HCT116 (cell line): ENCODE measurements at regions of chr7 and their contacts with region 1.

Region 1: DNA sequence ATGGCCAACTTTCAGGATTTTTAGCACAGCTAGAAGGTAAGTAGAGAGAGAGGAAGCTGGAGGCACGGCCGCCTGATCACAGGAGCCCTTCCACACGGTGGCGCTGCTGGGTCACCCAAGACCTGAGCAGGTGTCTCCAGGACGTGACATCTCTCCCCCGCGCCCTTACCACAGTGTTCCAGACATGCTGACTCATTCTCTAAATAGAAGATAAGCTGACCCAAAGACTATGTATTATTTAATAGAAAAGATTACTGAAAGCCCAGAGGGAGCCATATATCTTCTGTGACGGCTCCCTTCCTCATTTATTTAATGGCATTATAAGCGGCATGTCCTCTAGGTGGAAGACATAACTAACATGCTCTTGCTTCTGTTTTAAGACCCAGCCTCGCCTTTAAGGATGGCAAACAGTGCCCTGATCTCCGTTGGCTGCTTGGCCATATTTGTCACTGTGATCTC is 26.0 kb upstream of the MALSU1 start:
- DNase-seq: peak; percentile 93
- ATAC-seq: peak; percentile 95
- H3K4me3 ChIP-seq: peak overlapping the region; percentile 34 to 47
- H3K27ac ChIP-seq: peak overlapping the region; percentile 57
- H3K4me1 ChIP-seq: peaks cover 9 to 24% of the 10 kb centered on the region in 2 experiments; a peak in 3 of 4 replicates
- H3K27me3 ChIP-seq: no peaks in the 10 kb centered on the region
- CTCF ChIP-seq: peak; percentile 85 to 89 (median 89)
- POLR2A ChIP-seq: no peak
- RAD21 ChIP-seq: peak; percentile 90

Region 2: GRCh38 chr7:22833113-22833855 is 439.9 kb before region 1 on chr7:
- CTCF ChIA-PET with region 1: no interaction called
- POLR2A ChIA-PET with region 1: no interaction called
- RAD21 ChIA-PET with region 1: no interaction called
- intact Hi-C with region 1: no loop called
- DNase-seq: no peak
- ATAC-seq: no peak
- H3K4me3 ChIP-seq: no peak overlapping the region
- H3K27ac ChIP-seq: no peak overlapping the region
- H3K4me1 ChIP-seq: no peaks in the 10 kb centered on the region
- H3K27me3 ChIP-seq: no peaks in the 10 kb centered on the region
- CTCF ChIP-seq: no peak
- POLR2A ChIP-seq: no peak
- RAD21 ChIP-seq: no peak

Region 3: GRCh38 chr7:23181684-23182553 is 91.3 kb before region 1 on chr7 and contains the start of gene NUP42:
- CTCF ChIA-PET with region 1: interaction called, 10 read pairs
- POLR2A ChIA-PET with region 1: interaction called, 4 read pairs
- RAD21 ChIA-PET with region 1: no interaction called
- intact Hi-C with region 1: no loop called
- DNase-seq: peak; percentile 99
- ATAC-seq: peak; percentile 94
- H3K4me3 ChIP-seq: peak within 1 kb of the TSS; percentile 89 to 92
- H3K27ac ChIP-seq: peak within 1 kb of the TSS; percentile 78
- H3K4me1 ChIP-seq: peaks cover 5 to 14% of the 10 kb centered on the region in 2 experiments; a peak in 3 of 4 replicates
- H3K27me3 ChIP-seq: no peaks in the 10 kb centered on the region
- CTCF ChIP-seq: no peak
- POLR2A ChIP-seq: peak; percentile 76
- RAD21 ChIP-seq: no peak
- total RNA-seq, gene NUP42: 36.5 TPM

Region 4: GRCh38 chr7:23285657-23286646 is 12.8 kb after region 1 on chr7:
- CTCF ChIA-PET with region 1: interaction called, 11 read pairs
- POLR2A ChIA-PET with region 1: no interaction called
- RAD21 ChIA-PET with region 1: no interaction called
- intact Hi-C with region 1: no loop called
- DNase-seq: no peak
- ATAC-seq: peak; percentile 69
- H3K4me3 ChIP-seq: no peak overlapping the region
- H3K27ac ChIP-seq: no peak overlapping the region
- H3K4me1 ChIP-seq: no peaks in the 10 kb centered on the region
- H3K27me3 ChIP-seq: no peaks in the 10 kb centered on the region
- CTCF ChIP-seq: no peak
- POLR2A ChIP-seq: no peak
- RAD21 ChIP-seq: no peak

Region 5: GRCh38 chr7:23449941-23450340 is 176.8 kb after region 1 on chr7:
- CTCF ChIA-PET with region 1: no interaction called
- POLR2A ChIA-PET with region 1: no interaction called
- RAD21 ChIA-PET with region 1: no interaction called
- intact Hi-C with region 1: no loop called
- DNase-seq: no peak
- ATAC-seq: no peak
- H3K4me3 ChIP-seq: no peak overlapping the region
- H3K27ac ChIP-seq: no peak overlapping the region
- H3K4me1 ChIP-seq: peaks cover 0 to 10% of the 10 kb centered on the region in 2 experiments; a peak in 2 of 4 replicates
- H3K27me3 ChIP-seq: no peaks in the 10 kb centered on the region
- CTCF ChIP-seq: no peak
- POLR2A ChIP-seq: no peak
- RAD21 ChIP-seq: no peak

Region 6: GRCh38 chr7:23471106-23471859 is 198.1 kb after region 1 on chr7:
- CTCF ChIA-PET with region 1: interaction called, 3 read pairs
- POLR2A ChIA-PET with region 1: no interaction called
- RAD21 ChIA-PET with region 1: no interaction called
- intact Hi-C with region 1: loop called (anchors 2 kb)
- DNase-seq: peak; percentile 72
- ATAC-seq: peak; percentile 55
- H3K4me3 ChIP-seq: peak overlapping the region; percentile 75 to 77
- H3K27ac ChIP-seq: peak overlapping the region; percentile 97
- H3K4me1 ChIP-seq: peaks cover 34 to 49% of the 10 kb centered on the region in 2 experiments
- H3K27me3 ChIP-seq: peaks cover 12% of the 10 kb centered on the region
- CTCF ChIP-seq: no peak
- POLR2A ChIP-seq: no peak
- RAD21 ChIP-seq: no peak

Region 7: GRCh38 chr7:23546897-23547572 is 273.9 kb after region 1 on chr7:
- CTCF ChIA-PET with region 1: interaction called, 30 read pairs
- POLR2A ChIA-PET with region 1: interaction called, 3 read pairs
- RAD21 ChIA-PET with region 1: interaction called, 3 to 10 read pairs
- intact Hi-C with region 1: loop called (anchors 1 kb)
- DNase-seq: peak; percentile 88
- ATAC-seq: peak; percentile 87
- H3K4me3 ChIP-seq: no peak overlapping the region
- H3K27ac ChIP-seq: no peak overlapping the region
- H3K4me1 ChIP-seq: peaks cover 4 to 7% of the 10 kb centered on the region in 2 experiments; a peak in 3 of 4 replicates
- H3K27me3 ChIP-seq: no peaks in the 10 kb centered on the region
- CTCF ChIP-seq: peak; percentile 83 to 99 (median 98)
- POLR2A ChIP-seq: no peak
- RAD21 ChIP-seq: peak; percentile 95